ENCODE measurements at regions of chr17 and their contacts with region 1.

Region 1: DNA sequence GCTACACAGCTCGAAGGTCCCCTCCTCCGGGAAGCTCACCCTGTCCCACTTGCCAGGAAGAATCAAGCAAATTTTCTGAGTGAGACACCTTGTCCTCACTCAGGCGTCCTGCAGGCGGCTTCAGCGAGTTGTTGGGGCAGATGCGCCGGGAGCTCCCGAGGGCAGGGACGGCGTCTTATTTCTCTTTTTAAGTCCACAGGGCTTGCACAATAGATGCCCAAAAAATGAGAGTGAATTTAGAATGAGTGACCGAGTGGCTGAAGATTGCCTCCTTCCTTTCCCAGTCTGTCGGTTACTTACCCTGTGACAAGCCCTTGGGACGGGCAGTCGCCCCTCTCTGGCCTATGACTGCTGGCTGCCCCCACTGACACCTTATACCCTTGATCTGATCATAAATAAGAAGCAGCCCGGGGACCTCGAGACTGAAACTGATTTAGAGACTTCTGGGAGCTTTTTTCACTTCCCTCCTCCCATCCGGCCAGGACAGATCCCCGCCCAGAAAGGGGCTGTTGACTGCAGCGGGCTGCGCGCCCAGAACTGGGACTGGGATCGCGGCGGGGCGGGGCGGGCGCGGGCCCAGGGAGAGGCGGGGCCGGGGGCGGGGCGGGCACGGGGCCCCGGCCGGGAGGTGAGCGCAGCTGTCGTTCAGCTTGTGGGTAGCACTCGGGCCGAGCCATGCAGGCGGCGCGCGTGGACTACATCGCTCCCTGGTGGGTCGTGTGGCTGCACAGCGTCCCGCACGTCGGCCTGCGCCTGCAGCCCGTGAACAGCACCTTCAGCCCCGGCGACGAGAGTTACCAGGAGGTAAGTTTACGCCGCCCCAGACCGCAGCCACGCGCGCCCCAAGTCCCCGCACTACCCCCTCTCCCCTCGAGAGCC is at the start of gene TTYH2:
- DNase-seq: peak; percentile 90 to 94
- ATAC-seq: peak; percentile 80 to 91 (median 86)
- H3K4me3 ChIP-seq: peak within 1 kb of the TSS; percentile 37 to 72 (median 64)
- H3K27ac ChIP-seq: peak within 1 kb of the TSS; percentile 54 to 93 (median 86)
- H3K4me1 ChIP-seq: peaks cover 22 to 86% (median 74%) of the 10 kb centered on the region in 9 donors
- H3K27me3 ChIP-seq: no peaks in the 10 kb centered on the region
- CTCF ChIP-seq: peak in 6 of 9 donors; percentile 7 to 38 (median 32)
- total RNA-seq, gene TTYH2: 20.9 to 36.3 (median 26.1) TPM

Region 2: DNA sequence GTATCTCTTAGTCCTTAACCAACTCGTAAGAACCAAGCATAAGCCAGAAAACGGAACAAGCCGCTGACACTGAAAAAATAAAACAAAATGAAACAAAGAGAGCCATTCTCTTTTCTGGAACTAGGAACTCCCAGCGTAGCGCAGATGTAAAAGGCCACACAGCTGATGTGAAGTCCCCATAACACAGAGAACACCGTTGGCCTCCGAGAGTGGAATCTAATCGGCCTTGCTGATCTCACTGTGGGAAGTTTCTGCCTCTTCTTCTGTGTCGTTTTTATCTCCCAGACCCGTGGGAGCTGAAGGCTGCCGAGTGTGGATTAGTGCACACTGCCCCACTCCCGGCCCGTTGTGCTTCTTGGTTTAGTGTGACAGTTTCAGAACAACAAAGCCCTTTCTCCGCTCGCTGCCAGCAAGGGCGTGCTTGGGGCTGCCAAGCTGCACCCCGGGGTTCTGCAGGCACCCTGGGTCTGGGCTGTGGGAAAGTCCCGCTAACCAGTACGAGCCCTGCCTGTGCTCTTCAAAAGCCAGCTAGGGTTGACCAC is 22.0 kb after region 1 on chr17:
- intact Hi-C with region 1: loop called in 3 of 10 experiments (anchors 2 kb)
- DNase-seq: no peak
- ATAC-seq: peak in 6 of 8 donors; percentile 21 to 41 (median 30)
- H3K4me3 ChIP-seq: peak overlapping the region in 6 of 10 donors; percentile 4 to 31 (median 21)
- H3K27ac ChIP-seq: peak overlapping the region in 8 of 10 donors; percentile 2 to 88 (median 62)
- H3K4me1 ChIP-seq: peaks cover 0 to 60% (median 34%) of the 10 kb centered on the region in 9 donors
- H3K27me3 ChIP-seq: no peaks in the 10 kb centered on the region
- CTCF ChIP-seq: no peak

Region 3: DNA sequence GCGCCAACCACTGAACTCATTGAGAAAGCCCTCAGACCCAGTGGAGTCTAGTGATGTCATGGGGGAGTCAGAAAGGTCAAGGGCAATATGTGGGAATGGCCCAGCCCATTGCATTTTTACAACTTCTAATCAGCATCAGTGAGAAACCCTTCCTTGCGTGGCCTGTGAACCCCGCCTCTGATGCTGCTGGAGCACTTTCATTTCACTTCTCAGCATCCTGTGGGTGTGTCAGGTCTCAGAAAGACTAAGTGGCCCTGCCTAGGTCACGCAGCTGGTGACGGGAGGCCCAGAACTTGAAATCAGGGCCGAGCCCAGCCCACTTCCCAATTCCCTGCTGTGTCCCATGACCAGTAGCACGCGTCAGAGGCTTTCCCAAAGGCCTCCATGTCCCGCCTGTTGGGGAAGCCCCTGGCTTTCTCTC is 67.0 kb after region 1 on chr17:
- intact Hi-C with region 1: loop called in 2 of 10 experiments (anchors 5 kb)
- DNase-seq: no peak
- ATAC-seq: peak in 3 of 8 donors; percentile 4 to 24 (median 19)
- H3K4me3 ChIP-seq: no peak overlapping the region
- H3K27ac ChIP-seq: peak overlapping the region in 1 of 10 donors; percentile 80
- H3K4me1 ChIP-seq: peaks cover 0 to 50% (median 21%) of the 10 kb centered on the region in 9 donors
- H3K27me3 ChIP-seq: peaks cover 0 to under 1% (median 0%) of the 10 kb centered on the region in 7 donors
- CTCF ChIP-seq: no peak

Region 4: DNA sequence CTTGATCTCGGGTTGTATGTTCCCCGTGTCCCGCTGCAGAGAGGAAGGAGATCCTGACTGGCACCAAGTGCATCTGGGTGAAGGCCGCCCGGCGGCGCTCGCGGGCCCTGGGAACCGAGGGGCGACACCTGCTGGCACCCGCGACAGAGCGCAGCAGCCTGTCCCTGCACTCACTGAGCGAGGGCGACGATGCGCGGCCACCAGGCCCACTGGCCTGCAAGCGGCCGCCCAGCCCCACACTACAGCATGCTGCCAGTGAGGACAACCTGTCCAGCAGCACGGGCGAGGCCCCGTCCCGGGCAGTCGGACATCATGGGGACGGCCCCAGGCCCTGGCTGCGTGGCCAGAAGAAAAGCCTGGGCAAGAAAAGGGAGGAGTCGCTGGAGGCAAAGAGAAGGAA is 141.0 kb after region 1 on chr17:
- intact Hi-C with region 1: loop called in 3 of 10 experiments (anchors 5 to 10 kb)
- DNase-seq: peak in 1 of 2 donors; percentile 54
- ATAC-seq: peak in 5 of 8 donors; percentile 53 to 70 (median 64)
- H3K4me3 ChIP-seq: no peak overlapping the region
- H3K27ac ChIP-seq: no peak overlapping the region
- H3K4me1 ChIP-seq: peaks cover 0 to 12% (median 9%) of the 10 kb centered on the region in 9 donors
- H3K27me3 ChIP-seq: peaks cover 12 to 99% (median 92%) of the 10 kb centered on the region in 7 donors
- CTCF ChIP-seq: peak in 7 of 9 donors; percentile 34 to 74 (median 62)

Region 5: GRCh38 chr17:74442670-74443515 is 229.7 kb after region 1 on chr17:
- intact Hi-C with region 1: loop called in 1 of 10 experiments (anchors 10 kb)
- DNase-seq: peak; percentile 92 to 93
- ATAC-seq: peak; percentile 74 to 87 (median 84)
- H3K4me3 ChIP-seq: peak overlapping the region in 9 of 10 donors; percentile 6 to 42 (median 36)
- H3K27ac ChIP-seq: peak overlapping the region; percentile 76 to 97 (median 88)
- H3K4me1 ChIP-seq: peaks cover 28 to 65% (median 59%) of the 10 kb centered on the region in 9 donors
- H3K27me3 ChIP-seq: no peaks in the 10 kb centered on the region
- CTCF ChIP-seq: no peak